ENCODE measurements at regions of chr13 and their contacts with region 1.

Region 1: DNA sequence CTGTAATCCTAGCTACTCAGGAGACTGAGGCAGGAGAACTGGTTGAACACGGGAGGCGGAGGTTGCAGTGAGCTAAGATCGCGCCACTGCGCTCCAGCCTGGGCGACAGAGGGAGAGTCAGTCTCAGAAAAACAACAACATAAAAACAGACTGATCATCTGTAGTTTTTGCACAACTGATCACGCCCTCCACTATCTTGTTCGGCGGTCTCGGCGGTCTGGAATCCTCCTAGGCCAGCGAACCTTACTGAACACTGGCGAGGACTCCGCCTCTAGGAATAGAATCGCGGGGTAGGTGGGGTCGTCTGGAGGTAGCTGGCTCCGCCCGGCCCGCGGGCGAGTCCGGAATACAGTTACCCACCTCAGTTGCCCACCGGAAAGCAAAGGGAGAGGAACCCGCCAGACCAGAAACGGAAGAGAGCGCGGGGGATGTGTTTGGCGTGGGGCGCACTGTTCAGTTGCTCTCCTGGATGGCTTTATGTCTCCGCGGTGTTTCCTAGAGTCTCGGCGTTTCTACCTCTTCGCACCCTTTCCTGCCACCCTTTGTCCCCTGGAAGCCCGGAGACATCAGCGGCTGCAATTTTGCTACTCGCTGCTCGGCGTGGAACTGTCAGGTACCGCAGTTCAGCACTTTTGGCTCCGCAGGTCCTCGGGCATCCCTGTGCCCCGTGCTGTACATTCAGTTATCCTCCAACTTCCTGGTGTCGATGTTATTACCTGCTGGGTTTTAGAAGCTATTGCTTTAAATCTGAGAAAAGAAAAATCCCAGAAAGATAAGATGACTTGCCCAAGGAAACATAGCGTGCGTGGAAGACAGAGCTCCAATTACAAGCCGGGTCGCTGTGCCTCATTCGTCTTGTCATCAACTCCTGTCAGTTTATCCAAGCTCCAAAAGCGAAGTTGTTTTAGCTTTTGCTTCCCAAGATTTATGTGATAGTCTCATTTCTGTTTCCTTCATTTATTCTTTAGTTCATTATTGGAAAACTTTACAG is 24.9 kb upstream of the HNRNPA1L2 start:
- H3K4me3 Mint-ChIP-seq: peak overlapping the region; percentile 100
- H3K27ac Mint-ChIP-seq: peak overlapping the region; percentile 87
- H3K4me1 Mint-ChIP-seq: peaks cover 20% of the 10 kb centered on the region
- H3K27me3 Mint-ChIP-seq: peaks cover 5% of the 10 kb centered on the region

Region 2: DNA sequence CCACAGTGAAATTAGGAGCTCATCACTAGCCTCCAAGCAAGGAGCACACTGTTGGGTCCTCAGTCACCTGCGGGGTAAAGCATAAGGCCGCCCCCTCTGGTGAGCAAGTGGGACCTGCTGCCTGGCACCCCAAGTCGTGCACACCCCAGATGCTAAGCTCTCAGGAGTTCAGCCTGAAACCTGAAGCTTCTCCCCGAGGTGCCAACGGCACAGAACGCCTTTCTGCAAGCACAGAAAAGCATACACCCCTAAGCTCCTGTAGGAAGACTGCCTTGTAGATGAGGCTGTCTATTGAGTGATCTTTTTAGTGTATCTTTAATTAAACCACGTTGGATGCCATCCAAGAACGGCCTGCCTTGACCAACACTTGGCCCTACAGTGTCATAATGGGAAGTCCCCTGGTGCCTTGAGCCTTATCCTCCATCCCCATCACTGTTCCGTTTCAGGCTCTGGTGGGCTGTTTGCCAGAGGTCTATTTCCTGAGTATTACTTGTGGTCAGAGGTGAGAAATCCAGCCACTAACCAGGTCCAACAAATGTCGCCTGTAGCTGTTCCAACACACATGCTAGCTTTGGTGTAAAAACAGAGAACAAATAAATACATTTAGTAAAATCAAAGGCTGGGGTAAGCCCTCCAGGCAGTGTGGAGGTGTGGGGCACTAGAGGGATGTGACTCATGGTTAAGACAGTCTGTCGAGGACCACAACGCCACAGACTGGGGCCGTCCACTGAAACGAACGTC is 1551.1 kb before region 1 on chr13:
- intact Hi-C with region 1: no loop called
- H3K4me3 Mint-ChIP-seq: no peak overlapping the region
- H3K27ac Mint-ChIP-seq: no peak overlapping the region
- H3K4me1 Mint-ChIP-seq: peaks cover 11% of the 10 kb centered on the region
- H3K27me3 Mint-ChIP-seq: peaks cover 25% of the 10 kb centered on the region

Region 3: DNA sequence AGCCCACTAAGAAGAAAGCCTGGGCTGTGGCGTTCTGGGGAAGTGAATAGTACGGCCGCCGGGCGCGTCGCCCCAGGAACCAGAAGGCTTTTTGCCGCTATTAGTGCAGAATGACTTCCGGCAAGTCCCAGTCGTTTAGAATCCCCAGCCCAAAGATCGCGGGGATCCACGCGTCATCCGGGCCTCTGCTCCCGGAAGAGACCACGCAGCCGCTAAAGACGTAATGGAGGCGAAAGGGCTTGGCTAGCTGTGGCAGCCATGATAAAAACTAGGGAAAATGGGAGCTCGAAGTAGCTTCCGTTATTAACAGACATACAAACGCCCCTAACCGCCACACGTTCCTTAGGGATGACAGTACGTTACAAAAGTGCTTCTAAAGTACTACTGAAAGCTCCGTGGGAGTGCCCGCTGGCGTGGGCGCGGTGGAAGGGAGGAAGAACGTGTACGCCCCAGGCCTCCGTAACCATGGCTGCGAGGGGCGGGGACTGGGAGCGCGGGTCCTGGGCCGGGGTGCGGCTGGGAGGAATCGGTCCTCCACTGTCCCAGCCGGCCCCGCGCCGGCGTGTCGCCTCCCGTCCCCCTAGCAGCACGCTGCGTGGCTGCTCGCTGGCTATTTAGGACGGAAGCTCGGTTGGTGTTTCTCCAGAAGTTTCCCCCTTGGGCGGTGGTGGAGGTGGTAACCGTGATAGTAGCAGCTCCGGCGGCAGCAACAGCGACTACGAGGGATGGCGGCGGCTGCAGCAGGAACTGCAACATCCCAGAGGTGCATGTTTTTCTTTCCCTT is 35.0 kb after region 1 on chr13 and contains the start of gene SUGT1:
- intact Hi-C with region 1: loop called (anchors 1 kb)
- H3K4me3 Mint-ChIP-seq: no peak within 1 kb of the TSS
- H3K27ac Mint-ChIP-seq: no peak within 1 kb of the TSS
- H3K4me1 Mint-ChIP-seq: peaks cover 7% of the 10 kb centered on the region
- H3K27me3 Mint-ChIP-seq: no peaks in the 10 kb centered on the region